ENCODE measurements at regions of chrX and their contacts with region 1.

Region 1: GRCh38 chrX:19334945-19335626 is 8.6 kb upstream of the PDHA1 start:
- DNase-seq: peak; percentile 40
- ATAC-seq: peak; percentile 49
- H3K4me3 ChIP-seq: no peak overlapping the region
- H3K27ac ChIP-seq: no peak overlapping the region
- H3K4me1 ChIP-seq: no peaks in the 10 kb centered on the region
- H3K27me3 ChIP-seq: no peaks in the 10 kb centered on the region
- CTCF ChIP-seq: peak; percentile 47 to 97 (median 70)
- POLR2A ChIP-seq: no peak
- RAD21 ChIP-seq: peak; percentile 46

Region 2: GRCh38 chrX:17744896-17745523 is 1590.1 kb before region 1 on chrX:
- CTCF ChIA-PET with region 1: no interaction called
- POLR2A ChIA-PET with region 1: no interaction called
- RAD21 ChIA-PET with region 1: no interaction called
- intact Hi-C with region 1: loop called (anchors 10 kb)
- DNase-seq: no peak
- ATAC-seq: no peak
- H3K4me3 ChIP-seq: no peak overlapping the region
- H3K27ac ChIP-seq: no peak overlapping the region
- H3K4me1 ChIP-seq: no peaks in the 10 kb centered on the region
- H3K27me3 ChIP-seq: no peaks in the 10 kb centered on the region
- CTCF ChIP-seq: peak; percentile 17 to 44 (median 24); a peak in 3 of 6 replicates
- POLR2A ChIP-seq: no peak
- RAD21 ChIP-seq: peak; percentile 51

Region 3: GRCh38 chrX:18390941-18391538 is 944.0 kb before region 1 on chrX:
- CTCF ChIA-PET with region 1: interaction called, 15 read pairs
- POLR2A ChIA-PET with region 1: no interaction called
- RAD21 ChIA-PET with region 1: no interaction called
- intact Hi-C with region 1: loop called (anchors 1 kb)
- DNase-seq: peak; percentile 57
- ATAC-seq: peak; percentile 59; the same call in 1 of the 2 replicates
- H3K4me3 ChIP-seq: no peak overlapping the region
- H3K27ac ChIP-seq: no peak overlapping the region
- H3K4me1 ChIP-seq: no peaks in the 10 kb centered on the region
- H3K27me3 ChIP-seq: no peaks in the 10 kb centered on the region
- CTCF ChIP-seq: peak; percentile 30 to 88 (median 58); a peak in 4 of 6 replicates
- POLR2A ChIP-seq: no peak
- RAD21 ChIP-seq: peak; percentile 79

Region 4: GRCh38 chrX:18410043-18410442 is 925.0 kb before region 1 on chrX:
- CTCF ChIA-PET with region 1: no interaction called
- POLR2A ChIA-PET with region 1: no interaction called
- RAD21 ChIA-PET with region 1: interaction called in 1 of 2 experiments, 3 read pairs
- intact Hi-C with region 1: loop called (anchors 5 kb)
- DNase-seq: peak; percentile 21
- ATAC-seq: peak; percentile 64; the same call in 1 of the 2 replicates
- H3K4me3 ChIP-seq: no peak overlapping the region
- H3K27ac ChIP-seq: no peak overlapping the region
- H3K4me1 ChIP-seq: no peaks in the 10 kb centered on the region
- H3K27me3 ChIP-seq: no peaks in the 10 kb centered on the region
- CTCF ChIP-seq: peak; percentile 12 to 51 (median 37); a peak in 4 of 6 replicates
- POLR2A ChIP-seq: no peak
- RAD21 ChIP-seq: peak; percentile 66

Region 5: GRCh38 chrX:18931972-18932371 is 403.1 kb before region 1 on chrX:
- CTCF ChIA-PET with region 1: no interaction called
- POLR2A ChIA-PET with region 1: no interaction called
- RAD21 ChIA-PET with region 1: interaction called in 1 of 2 experiments, 9 read pairs
- intact Hi-C with region 1: loop called (anchors 1 kb)
- DNase-seq: no peak
- ATAC-seq: peak; percentile 62
- H3K4me3 ChIP-seq: no peak overlapping the region
- H3K27ac ChIP-seq: no peak overlapping the region
- H3K4me1 ChIP-seq: no peaks in the 10 kb centered on the region
- H3K27me3 ChIP-seq: no peaks in the 10 kb centered on the region
- CTCF ChIP-seq: peak in 2 of 3 experiments; percentile 42 to 46; a peak in 3 of 6 replicates
- POLR2A ChIP-seq: no peak
- RAD21 ChIP-seq: peak; percentile 61

Region 6: GRCh38 chrX:19017271-19017670 is 317.8 kb before region 1 on chrX:
- CTCF ChIA-PET with region 1: interaction called, 9 read pairs
- POLR2A ChIA-PET with region 1: no interaction called
- RAD21 ChIA-PET with region 1: interaction called, 3 to 6 read pairs
- intact Hi-C with region 1: loop called (anchors 1 kb)
- DNase-seq: no peak
- ATAC-seq: peak; percentile 77
- H3K4me3 ChIP-seq: no peak overlapping the region
- H3K27ac ChIP-seq: no peak overlapping the region
- H3K4me1 ChIP-seq: no peaks in the 10 kb centered on the region
- H3K27me3 ChIP-seq: no peaks in the 10 kb centered on the region
- CTCF ChIP-seq: peak; percentile 56 to 73 (median 65)
- POLR2A ChIP-seq: no peak
- RAD21 ChIP-seq: peak; percentile 67

Region 7: DNA sequence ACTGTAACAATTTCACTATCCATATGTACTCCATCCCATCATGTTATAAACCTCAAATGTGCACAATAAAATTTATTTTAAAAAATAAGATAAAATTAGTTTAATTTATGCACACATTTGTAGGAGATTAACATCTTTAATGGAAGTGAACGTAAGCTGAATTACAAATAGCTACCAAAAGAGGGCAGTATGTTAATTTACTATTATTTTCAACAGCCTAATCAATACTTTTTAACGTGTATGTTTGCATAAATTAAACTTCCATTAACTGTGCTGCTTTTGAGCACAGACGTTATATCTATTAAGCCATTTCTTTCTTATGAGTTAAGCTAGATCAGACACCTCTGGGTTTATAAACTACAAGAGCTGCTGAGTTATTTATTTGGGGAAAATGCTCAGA is 294.7 kb before region 1 on chrX:
- CTCF ChIA-PET with region 1: interaction called, 11 read pairs
- POLR2A ChIA-PET with region 1: no interaction called
- RAD21 ChIA-PET with region 1: interaction called, 4 to 8 read pairs
- intact Hi-C with region 1: no loop called
- DNase-seq: peak; percentile 4
- ATAC-seq: no peak
- H3K4me3 ChIP-seq: no peak overlapping the region
- H3K27ac ChIP-seq: no peak overlapping the region
- H3K4me1 ChIP-seq: no peaks in the 10 kb centered on the region
- H3K27me3 ChIP-seq: no peaks in the 10 kb centered on the region
- CTCF ChIP-seq: peak in 2 of 3 experiments; percentile 35 to 44; a peak in 3 of 6 replicates
- POLR2A ChIP-seq: no peak
- RAD21 ChIP-seq: peak; percentile 39

Measured in HCT116 (cell line).